Aorta (tissue), 5 donors: ENCODE measurements at regions of chr6 and their contacts with region 1.

Region 1: GRCh38 chr6:152267967-152268845 is 369.0 kb downstream of the SYNE1 start:
- DNase-seq: no peak
- ATAC-seq: no peak
- H3K4me3 ChIP-seq: no peak overlapping the region
- H3K27ac ChIP-seq: no peak overlapping the region
- H3K4me1 ChIP-seq: peaks cover 5 to 8% of the 10 kb centered on the region in 2 donors
- H3K27me3 ChIP-seq: no peaks in the 10 kb centered on the region

Region 2: GRCh38 chr6:152151920-152152319 is 116.3 kb before region 1 on chr6:
- intact Hi-C with region 1: loop called in 1 of 2 experiments (anchors 10 kb)
- DNase-seq: no peak
- ATAC-seq: peak; percentile 13
- H3K4me3 ChIP-seq: no peak overlapping the region
- H3K27ac ChIP-seq: no peak overlapping the region
- H3K4me1 ChIP-seq: no peaks in the 10 kb centered on the region
- H3K27me3 ChIP-seq: no peaks in the 10 kb centered on the region

Region 3: DNA sequence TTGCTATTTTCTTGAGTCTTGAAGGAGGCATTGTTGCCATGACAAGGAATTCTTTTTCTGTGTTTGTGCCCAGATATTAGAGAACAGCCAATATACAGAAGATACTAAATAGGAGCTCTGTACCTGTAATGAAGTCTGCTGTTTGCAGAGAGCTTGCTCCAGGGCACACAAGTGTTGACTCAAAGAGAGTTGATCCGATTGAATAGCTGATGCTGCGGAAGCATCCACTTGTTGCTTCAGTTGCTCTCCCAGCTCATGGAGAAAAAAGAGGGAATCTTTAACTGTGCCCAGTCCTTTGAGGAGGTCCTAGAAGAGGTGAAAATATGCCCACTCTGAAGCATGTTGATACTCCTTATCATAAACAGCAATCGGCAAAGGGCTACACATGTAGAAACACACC is 49.3 kb before region 1 on chr6:
- intact Hi-C with region 1: loop called in 1 of 2 experiments (anchors 10 kb)
- DNase-seq: no peak
- ATAC-seq: no peak
- H3K4me3 ChIP-seq: no peak overlapping the region
- H3K27ac ChIP-seq: no peak overlapping the region
- H3K4me1 ChIP-seq: no peaks in the 10 kb centered on the region
- H3K27me3 ChIP-seq: no peaks in the 10 kb centered on the region